GM10248 (cell line): ENCODE measurements at regions of chr3 and their contacts with region 1.

Region 1: DNA sequence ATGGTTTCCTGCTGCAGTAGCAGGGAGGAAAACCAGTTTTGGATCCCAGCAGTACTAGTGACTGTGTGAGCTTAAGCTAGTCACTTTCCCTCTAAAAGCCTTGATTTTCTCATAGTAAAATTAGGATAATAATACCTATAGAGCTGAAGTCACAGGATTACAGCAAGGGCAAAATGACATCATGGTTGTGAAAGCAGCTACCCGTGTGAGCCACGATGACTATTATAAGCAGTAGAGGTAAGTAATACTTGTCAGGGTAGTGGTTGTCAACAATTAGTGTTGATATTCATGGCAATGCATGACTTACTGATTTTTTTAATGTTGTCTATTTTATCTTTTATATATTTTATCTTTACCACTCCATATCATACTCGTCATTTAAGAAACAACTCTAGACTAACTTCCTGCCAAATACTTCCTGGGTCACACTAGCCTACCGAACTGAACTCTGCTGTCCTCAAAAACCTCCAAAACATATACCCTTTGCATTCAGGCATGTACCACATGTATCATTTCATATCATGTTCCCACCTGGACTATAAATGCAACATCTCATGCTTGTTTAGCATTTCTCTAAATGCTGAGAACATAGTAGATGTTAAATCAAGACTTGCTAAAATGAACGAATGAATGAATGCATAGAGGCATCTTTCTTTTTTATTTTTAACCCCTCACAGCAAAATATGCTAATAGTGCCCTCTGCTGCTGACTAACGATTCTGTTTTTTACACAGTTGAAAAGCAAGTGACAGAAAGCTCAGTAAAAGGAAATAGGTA is 172.6 kb downstream of the P3H2 start:
- DNase-seq: peak; percentile 24
- CTCF ChIP-seq: peak; percentile 29

Region 2: DNA sequence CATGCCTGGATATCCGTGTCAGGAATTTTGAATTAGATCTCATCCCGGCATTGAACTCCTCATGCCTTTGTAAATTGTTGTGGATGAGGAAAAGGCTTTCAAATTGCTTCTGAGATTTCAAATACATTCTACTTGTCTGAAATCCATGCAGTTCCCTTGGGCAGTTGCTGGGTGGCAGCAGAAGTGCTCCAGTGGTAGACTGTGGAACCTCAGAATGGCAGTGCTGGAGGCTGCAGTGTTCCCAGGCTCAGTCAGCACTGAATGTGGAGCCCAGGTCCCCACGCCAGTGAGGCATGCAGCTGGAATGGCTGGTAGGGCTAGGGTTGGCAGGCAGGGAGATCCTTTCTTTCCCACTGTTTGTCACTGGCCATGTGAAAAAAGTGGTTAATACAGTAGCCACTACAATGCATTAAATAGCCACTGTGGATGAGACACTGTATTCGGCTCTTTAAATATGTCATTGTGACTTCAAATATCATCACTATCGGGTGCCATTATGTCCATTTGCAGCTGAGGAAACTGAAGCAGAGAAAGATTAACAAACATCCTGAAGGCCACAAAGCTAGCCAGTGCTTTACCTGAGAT is 677.8 kb before region 1 on chr3:
- CTCF ChIA-PET with region 1: interaction called, 98 read pairs
- POLR2A ChIA-PET with region 1: no interaction called
- DNase-seq: peak; percentile 39
- CTCF ChIP-seq: peak; percentile 65

Region 3: DNA sequence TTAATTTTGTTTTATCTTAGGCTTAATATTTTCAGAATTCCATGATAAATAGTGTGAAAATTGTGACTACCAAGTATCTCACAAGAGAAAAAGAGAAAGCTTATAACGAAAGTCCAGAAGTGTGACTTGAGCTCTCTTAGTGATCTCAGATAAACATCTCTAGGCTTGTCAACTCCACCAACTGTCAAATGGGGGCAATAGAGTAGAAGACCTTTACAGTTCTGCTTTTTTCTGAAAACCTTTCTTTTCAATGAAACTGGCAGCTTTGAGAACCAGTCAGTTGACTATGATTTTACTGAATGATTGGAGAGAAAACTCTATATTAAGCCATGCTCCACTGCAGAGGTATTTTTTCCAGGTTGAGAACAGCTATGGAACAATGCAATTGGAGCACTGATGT is 436.1 kb before region 1 on chr3:
- CTCF ChIA-PET with region 1: interaction called, 12 read pairs
- POLR2A ChIA-PET with region 1: no interaction called
- DNase-seq: peak; percentile 35
- CTCF ChIP-seq: peak; percentile 14

Region 4: DNA sequence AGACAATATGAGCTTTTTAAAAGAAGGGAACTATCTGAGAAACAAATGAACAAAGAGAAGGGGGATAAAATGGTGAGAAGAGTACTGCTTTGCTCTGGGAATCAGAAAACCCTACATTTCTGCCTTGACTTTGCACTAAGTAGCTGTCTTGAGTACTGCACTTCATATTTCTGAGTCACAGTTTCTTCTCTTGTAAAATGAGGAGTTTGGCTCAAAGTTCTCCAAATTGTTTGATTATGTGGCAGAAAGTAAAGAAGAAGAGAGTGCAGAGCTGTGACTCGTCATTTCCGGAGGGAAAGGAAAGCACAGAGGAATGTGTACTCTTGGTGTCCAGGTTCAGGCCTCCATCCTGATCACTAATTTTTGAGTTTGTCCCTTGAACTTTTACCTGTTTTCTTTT is 262.3 kb before region 1 on chr3:
- CTCF ChIA-PET with region 1: interaction called, 12 read pairs
- POLR2A ChIA-PET with region 1: no interaction called
- DNase-seq: no peak
- CTCF ChIP-seq: no peak

Region 5: GRCh38 chr3:189744232-189744631 is 203.9 kb before region 1 on chr3:
- CTCF ChIA-PET with region 1: no interaction called
- POLR2A ChIA-PET with region 1: no interaction called
- DNase-seq: no peak
- CTCF ChIP-seq: no peak

Region 6: DNA sequence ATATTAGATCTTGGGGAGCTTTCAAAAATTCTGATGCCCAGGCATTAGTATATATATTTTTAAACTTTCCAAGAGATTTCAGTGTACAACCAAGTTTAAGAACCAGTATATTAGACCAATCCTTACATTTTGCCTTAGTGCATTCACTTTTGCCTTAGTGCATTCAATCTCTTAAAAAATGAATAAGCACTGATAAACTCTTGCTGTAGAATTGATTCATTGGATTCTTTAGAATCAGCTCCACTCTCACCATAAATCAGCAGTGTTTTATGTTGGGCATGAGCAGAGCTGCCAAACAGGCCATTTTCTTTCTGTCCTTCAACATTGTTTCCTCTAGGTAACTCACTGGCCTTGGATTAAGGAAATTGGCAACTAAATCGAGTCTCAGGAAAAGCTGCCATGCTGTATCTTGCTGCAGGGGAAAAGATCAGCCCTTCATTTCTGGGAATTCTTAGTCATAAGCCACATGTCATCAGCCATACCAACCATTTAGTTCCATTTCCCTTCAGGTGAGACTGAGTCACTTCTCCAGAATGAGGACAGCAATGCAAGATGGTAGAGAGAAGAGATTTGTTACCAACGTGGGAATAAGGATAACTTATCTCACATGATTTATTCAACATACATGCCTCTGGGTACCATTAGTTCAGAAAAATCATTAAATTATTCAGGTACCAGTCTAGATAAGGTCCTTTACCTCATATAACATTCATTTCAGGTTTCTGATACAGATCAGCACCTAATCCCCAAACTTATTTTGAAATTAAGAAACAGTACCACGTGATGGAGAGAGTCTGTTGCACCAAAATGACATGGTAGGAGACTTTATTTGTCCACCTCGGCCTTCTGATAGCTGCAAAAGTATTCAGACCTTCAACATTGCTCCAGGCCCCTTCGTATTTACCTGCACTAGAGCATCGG is 19.9 kb before region 1 on chr3:
- CTCF ChIA-PET with region 1: interaction called, 16 read pairs
- POLR2A ChIA-PET with region 1: no interaction called
- DNase-seq: no peak
- CTCF ChIP-seq: no peak

Region 7: DNA sequence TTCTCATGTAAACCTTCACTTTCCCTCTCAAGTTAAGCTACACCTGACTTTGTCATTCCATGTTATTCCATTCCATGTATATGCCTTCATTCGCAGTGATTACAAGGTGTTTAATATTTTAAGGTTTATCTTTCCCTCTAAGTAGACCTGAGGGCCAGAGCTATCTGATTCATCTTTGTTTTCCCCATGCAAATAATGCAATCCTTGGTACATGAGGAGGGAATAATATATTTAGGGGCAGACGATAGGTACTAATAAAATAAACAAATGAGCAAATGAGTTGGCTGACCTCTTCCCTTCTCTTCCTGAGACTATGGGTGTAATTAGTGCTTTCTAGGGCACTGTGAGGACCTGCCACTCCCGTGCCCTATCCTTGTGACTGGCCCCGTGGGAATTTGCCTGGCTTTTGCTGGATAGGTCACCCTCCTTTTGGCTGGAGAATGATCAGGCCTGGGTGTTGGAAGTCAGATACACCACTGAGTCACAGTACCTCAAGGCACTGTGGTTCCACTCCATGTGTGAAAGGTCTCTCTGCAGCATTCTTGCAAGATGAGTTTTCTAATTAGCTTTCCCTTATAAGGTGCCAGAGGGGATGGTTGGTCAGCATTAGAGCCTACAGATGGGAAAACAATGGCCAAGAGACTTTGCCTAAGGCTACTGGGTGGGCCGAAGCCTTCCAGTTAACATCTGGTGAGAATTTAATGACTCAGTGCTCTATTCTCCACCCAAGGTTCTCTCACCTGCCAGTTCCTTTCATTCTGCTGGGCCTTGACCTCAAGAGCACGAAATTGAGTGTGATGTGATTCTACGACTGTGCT is 10.6 kb before region 1 on chr3:
- CTCF ChIA-PET with region 1: interaction called, 14 read pairs
- POLR2A ChIA-PET with region 1: no interaction called
- DNase-seq: no peak
- CTCF ChIP-seq: no peak